Right cardiac atrium (tissue), 5 donors: ENCODE measurements at regions of chr18 and their contacts with region 1.

Region 1: DNA sequence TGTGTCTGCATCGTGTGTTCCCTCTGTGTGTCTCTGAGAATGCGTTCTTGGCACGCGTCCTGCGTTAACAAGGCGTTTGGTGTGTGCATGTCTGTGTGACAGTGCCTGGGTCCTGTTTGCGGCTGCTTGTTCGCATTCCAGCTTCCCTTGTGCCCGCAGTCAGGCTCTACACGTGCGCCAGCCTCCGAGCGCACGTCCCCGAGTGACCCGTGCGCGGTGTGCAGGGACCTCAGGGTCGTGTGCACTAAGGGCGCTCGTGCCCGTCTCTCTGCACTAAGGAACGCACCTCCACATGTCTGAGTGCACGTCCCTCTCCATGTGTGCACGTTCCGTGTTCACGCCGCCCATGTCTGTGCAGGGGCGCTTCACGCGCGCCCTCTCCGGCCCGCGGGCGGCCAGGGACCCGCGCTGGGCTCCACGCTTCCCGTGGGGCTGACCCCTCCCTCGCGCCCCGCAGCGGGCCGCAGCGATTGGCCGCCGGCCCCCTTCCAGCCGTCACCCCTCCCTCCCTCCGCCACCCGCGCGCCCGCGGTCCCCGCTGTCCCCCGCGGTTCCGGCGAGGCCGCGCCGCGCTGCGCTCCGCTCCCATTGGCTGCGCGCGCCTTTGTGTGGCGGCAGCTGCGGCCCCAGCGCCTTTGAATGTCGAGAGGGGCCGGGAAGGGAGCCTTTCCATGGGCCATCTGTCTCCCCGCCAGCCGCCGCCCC is 229.4 kb downstream of the HAUS1 start:
- DNase-seq: peak; percentile 31 to 78 (median 70)
- ATAC-seq: peak; percentile 72 to 83
- H3K4me3 ChIP-seq: peak overlapping the region; percentile 94
- H3K27ac ChIP-seq: no peak overlapping the region
- H3K4me1 ChIP-seq: no peaks in the 10 kb centered on the region
- H3K27me3 ChIP-seq: no peaks in the 10 kb centered on the region

Region 2: GRCh38 chr18:46155641-46156051 is 177.9 kb before region 1 on chr18:
- intact Hi-C with region 1: loop called in 1 of 4 experiments (anchors 5 kb)
- DNase-seq: no peak
- ATAC-seq: no peak
- H3K4me3 ChIP-seq: no peak overlapping the region
- H3K27ac ChIP-seq: no peak overlapping the region
- H3K4me1 ChIP-seq: peaks cover 2% of the 10 kb centered on the region
- H3K27me3 ChIP-seq: no peaks in the 10 kb centered on the region

Region 3: DNA sequence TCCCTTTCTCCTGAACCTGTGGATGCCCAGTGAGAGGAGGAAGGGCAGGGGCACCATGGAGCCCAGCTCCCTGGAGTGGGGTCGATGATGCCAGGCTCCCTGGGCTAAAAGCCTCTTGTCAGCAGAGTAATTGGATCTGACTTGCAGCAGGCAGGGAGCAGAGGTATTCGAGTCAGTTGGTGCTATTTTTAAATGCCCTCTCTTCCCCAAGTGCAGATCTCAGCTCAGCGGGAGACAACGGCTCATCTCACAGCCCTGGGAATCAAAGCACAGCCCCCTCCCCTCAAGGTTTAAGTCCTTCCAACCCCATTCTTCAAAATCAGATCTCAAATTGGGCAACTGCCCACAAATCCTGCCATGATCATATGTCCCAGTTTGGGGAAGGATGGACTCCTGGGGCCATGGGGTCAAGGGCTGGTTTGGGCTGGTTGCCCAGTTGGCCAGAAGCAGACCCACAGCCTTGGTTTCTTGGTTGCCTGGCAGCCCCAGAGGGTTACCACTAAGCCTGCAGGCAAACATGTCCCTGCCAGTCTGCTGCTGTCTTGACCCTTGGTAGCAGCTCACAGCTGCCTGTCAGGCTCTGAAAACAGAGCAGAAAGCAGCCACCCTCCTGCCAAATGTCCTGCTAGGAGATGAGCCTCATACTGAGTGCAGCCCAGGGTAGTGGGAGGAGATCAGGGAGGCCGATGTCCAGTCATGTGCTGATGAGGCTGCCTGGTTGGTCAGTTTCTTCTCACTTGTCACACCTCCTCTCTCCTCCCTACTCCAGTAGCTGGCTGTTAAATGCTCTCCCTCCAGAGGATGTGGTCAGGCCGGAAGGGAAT is 78.5 kb after region 1 on chr18:
- intact Hi-C with region 1: loop called in 1 of 4 experiments (anchors 10 kb)
- DNase-seq: peak; percentile 33 to 82 (median 78)
- ATAC-seq: peak; percentile 74 to 83
- H3K4me3 ChIP-seq: no peak overlapping the region
- H3K27ac ChIP-seq: peak overlapping the region; percentile 92
- H3K4me1 ChIP-seq: peaks cover 21% of the 10 kb centered on the region
- H3K27me3 ChIP-seq: no peaks in the 10 kb centered on the region